Mammary epithelial cell (primary cell): ENCODE measurements at regions of chr11 and their contacts with region 1.

Region 1: DNA sequence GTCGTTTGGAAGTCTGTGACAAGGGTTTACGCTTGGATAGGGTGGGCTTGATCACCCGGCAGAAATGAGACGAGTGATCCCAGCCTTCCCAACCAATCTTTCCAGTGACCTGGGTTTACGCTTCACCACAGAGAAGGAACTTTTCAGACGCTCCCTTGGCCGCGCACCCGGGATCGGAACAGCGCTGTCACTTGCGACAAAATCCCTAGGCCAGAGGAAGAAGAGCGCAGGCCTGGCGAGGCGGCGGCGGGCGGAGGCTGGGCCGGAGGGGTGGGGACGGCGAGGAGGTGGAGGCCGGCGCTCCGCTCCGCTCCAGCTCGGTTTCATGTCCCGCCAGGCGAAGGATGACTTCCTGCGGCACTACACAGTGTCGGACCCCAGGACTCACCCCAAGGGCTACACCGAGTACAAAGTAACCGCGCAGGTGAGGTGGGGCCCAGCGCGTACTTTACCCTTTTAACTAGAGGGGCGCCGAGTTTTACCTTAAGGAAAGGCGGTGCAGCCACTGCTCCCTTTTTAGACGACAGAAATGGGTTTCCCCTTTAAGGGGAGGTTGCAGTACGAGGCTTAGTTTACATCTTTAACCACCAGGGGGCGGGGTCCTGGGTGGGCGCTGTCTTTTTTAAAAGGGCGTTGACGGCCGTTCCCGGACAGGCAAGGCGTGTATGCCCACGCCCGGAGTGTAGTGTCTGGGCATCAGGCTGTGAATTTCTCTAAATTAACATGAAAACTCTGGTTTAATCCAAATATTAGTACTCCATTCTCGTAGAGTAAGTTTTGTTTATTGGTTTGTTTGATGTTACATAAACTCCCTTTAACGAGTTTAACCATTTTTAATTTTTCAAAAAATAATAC is at the start of gene SNX15:
- DNase-seq: peak; percentile 96
- H3K4me3 ChIP-seq: peak within 1 kb of the TSS; percentile 54 to 80 (median 72)
- H3K27ac ChIP-seq: peak within 1 kb of the TSS; percentile 41
- H3K4me1 ChIP-seq: peaks cover 11% of the 10 kb centered on the region
- H3K27me3 ChIP-seq: no peaks in the 10 kb centered on the region
- CTCF ChIP-seq: peak; percentile 34 to 66
- total RNA-seq, gene SNX15: 12.3 to 19.7 TPM

Region 2: DNA sequence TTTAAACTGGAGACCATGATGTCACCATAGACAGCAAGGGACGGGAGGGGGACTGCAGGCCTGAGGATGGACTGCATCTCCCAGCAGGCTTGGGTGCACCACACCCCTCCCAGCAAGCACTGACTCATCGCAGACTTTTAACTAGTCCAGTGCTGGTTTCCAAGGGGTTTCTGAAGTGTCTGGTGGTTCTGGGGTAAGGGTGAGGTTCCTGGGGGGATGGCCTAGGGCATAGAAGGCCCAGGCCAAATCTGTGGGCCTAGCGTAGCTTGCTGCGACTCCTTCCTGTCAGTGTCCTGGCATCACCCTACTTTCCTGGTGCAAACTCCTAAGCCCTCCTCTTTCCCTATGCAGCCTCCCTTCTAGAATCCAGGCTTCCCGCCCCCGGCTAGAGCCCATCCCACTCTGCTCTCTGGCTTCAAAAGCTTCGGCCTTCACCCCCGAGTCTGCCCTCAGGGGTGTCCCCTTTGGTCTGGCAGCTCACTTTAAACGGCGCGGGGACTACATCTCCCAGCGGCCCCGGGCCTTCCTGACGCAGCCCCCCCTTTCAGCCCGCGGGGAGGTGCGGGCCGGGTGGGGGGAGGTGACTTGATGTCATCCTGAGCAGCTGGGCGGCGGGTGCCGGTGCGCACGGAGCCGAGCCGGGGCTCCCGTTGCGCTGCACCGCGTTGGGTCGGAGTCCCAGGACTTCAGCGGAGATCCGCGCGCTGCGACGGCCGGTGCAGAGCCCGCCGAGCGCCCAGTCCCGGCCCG is 103.2 kb before region 1 on chr11 and contains the start of gene PPP2R5B:
- CTCF ChIA-PET with region 1: no interaction called
- dilution Hi-C with region 1: no loop called
- in situ Hi-C with region 1: no loop called
- intact Hi-C with region 1: loop called (anchors 1 kb)
- DNase-seq: peak; percentile 88
- H3K4me3 ChIP-seq: peak within 1 kb of the TSS; percentile 77 to 88 (median 78)
- H3K27ac ChIP-seq: peak within 1 kb of the TSS; percentile 70
- H3K4me1 ChIP-seq: peaks cover 10% of the 10 kb centered on the region
- H3K27me3 ChIP-seq: no peaks in the 10 kb centered on the region
- CTCF ChIP-seq: no peak
- total RNA-seq, gene PPP2R5B: 13.8 to 32.7 TPM

Region 3: GRCh38 chr11:65040847-65041621 is 13.6 kb after region 1 on chr11 and contains the start of gene SAC3D1:
- CTCF ChIA-PET with region 1: no interaction called
- dilution Hi-C with region 1: no loop called
- in situ Hi-C with region 1: no loop called
- intact Hi-C with region 1: loop called (anchors 1 kb)
- DNase-seq: peak; percentile 97
- H3K4me3 ChIP-seq: peak within 1 kb of the TSS; percentile 43 to 89 (median 80)
- H3K27ac ChIP-seq: peak within 1 kb of the TSS; percentile 9
- H3K4me1 ChIP-seq: peaks cover 16% of the 10 kb centered on the region
- H3K27me3 ChIP-seq: no peaks in the 10 kb centered on the region
- CTCF ChIP-seq: no peak
- total RNA-seq, gene SAC3D1: 13.2 to 25.1 TPM

Region 4: GRCh38 chr11:65095974-65096806 is 68.8 kb after region 1 on chr11 and contains the start of gene VPS51:
- CTCF ChIA-PET with region 1: no interaction called
- dilution Hi-C with region 1: no loop called
- in situ Hi-C with region 1: no loop called
- intact Hi-C with region 1: loop called (anchors 1 kb)
- DNase-seq: peak; percentile 83
- H3K4me3 ChIP-seq: peak within 1 kb of the TSS; percentile 57 to 70 (median 61)
- H3K27ac ChIP-seq: peak within 1 kb of the TSS; percentile 50
- H3K4me1 ChIP-seq: peaks cover 9% of the 10 kb centered on the region
- H3K27me3 ChIP-seq: no peaks in the 10 kb centered on the region
- CTCF ChIP-seq: no peak
- total RNA-seq, gene VPS51: 78.4 to 125 TPM

Region 5: GRCh38 chr11:65225279-65226102 is 198.1 kb after region 1 on chr11:
- CTCF ChIA-PET with region 1: no interaction called
- dilution Hi-C with region 1: no loop called
- in situ Hi-C with region 1: no loop called
- intact Hi-C with region 1: no loop called
- DNase-seq: peak; percentile 77
- H3K4me3 ChIP-seq: peak overlapping the region; percentile 39 to 46 (median 45)
- H3K27ac ChIP-seq: peak overlapping the region; percentile 45
- H3K4me1 ChIP-seq: peaks cover 19% of the 10 kb centered on the region
- H3K27me3 ChIP-seq: no peaks in the 10 kb centered on the region
- CTCF ChIP-seq: peak; percentile 21 to 62

Region 6: GRCh38 chr11:65314501-65315203 is 287.2 kb after region 1 on chr11 and contains the start of gene CDC42EP2:
- CTCF ChIA-PET with region 1: no interaction called
- dilution Hi-C with region 1: no loop called
- in situ Hi-C with region 1: no loop called
- intact Hi-C with region 1: loop called (anchors 5 kb)
- DNase-seq: peak; percentile 82
- H3K4me3 ChIP-seq: peak within 1 kb of the TSS; percentile 77 to 91 (median 88)
- H3K27ac ChIP-seq: peak within 1 kb of the TSS; percentile 46
- H3K4me1 ChIP-seq: peaks cover 13% of the 10 kb centered on the region
- H3K27me3 ChIP-seq: no peaks in the 10 kb centered on the region
- CTCF ChIP-seq: no peak
- total RNA-seq, gene CDC42EP2: 6.8 to 24.8 TPM